ENCODE measurements at regions of chr18 and their contacts with region 1.

Region 1: GRCh38 chr18:51110073-51110803 is 80.2 kb downstream of the SMAD4 start:
- DNase-seq: peak; percentile 73
- H3K4me3 ChIP-seq: no peak overlapping the region
- H3K27ac ChIP-seq: no peak overlapping the region
- H3K4me1 ChIP-seq: peaks cover 0 to 6% (median 3%) of the 10 kb centered on the region in 4 donors
- H3K27me3 ChIP-seq: no peaks in the 10 kb centered on the region
- CTCF ChIP-seq: peak; percentile 83 to 98 (median 85)
- EP300 ChIP-seq: no peak
- POLR2A ChIP-seq: no peak

Region 2: GRCh38 chr18:51211552-51211951 is 101.3 kb after region 1 on chr18:
- intact Hi-C with region 1: no loop called
- DNase-seq: no peak
- H3K4me3 ChIP-seq: no peak overlapping the region
- H3K27ac ChIP-seq: no peak overlapping the region
- H3K4me1 ChIP-seq: no peaks in the 10 kb centered on the region
- H3K27me3 ChIP-seq: no peaks in the 10 kb centered on the region
- CTCF ChIP-seq: no peak
- EP300 ChIP-seq: no peak
- POLR2A ChIP-seq: no peak

Region 3: GRCh38 chr18:51383116-51383515 is 272.9 kb after region 1 on chr18:
- intact Hi-C with region 1: loop called (anchors 2 kb)
- DNase-seq: no peak
- H3K4me3 ChIP-seq: no peak overlapping the region
- H3K27ac ChIP-seq: no peak overlapping the region
- H3K4me1 ChIP-seq: no peaks in the 10 kb centered on the region
- H3K27me3 ChIP-seq: no peaks in the 10 kb centered on the region
- CTCF ChIP-seq: no peak
- EP300 ChIP-seq: no peak
- POLR2A ChIP-seq: no peak

Region 4: DNA sequence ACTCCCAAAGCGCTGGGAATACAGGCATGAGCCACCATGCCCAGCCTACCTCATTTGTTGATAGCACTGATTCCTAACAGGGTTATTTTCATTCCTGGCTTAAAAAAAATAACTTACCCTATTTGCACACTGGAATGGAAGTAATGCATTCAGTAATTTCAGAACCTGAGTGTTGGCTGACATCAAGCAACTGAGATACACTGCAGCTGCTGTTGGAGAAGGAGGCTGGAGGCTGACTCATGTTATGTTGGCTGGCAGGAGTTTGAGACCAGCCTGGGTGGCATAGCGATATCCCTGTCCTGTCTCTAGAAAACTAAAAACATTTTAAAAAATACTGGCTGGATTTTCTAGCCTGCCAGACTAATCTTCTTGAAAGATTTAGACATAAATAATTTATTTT is 472.3 kb after region 1 on chr18:
- intact Hi-C with region 1: no loop called
- DNase-seq: no peak
- H3K4me3 ChIP-seq: no peak overlapping the region
- H3K27ac ChIP-seq: no peak overlapping the region
- H3K4me1 ChIP-seq: no peaks in the 10 kb centered on the region
- H3K27me3 ChIP-seq: no peaks in the 10 kb centered on the region
- CTCF ChIP-seq: no peak
- EP300 ChIP-seq: no peak
- POLR2A ChIP-seq: no peak

Region 5: GRCh38 chr18:51621113-51621863 is 511.1 kb after region 1 on chr18:
- intact Hi-C with region 1: loop called (anchors 5 kb)
- DNase-seq: no peak
- H3K4me3 ChIP-seq: no peak overlapping the region
- H3K27ac ChIP-seq: no peak overlapping the region
- H3K4me1 ChIP-seq: peaks cover 0 to 8% (median 0%) of the 10 kb centered on the region in 4 donors
- H3K27me3 ChIP-seq: peaks cover 0 to 14% (median 0%) of the 10 kb centered on the region in 3 donors
- CTCF ChIP-seq: peak; percentile 12 to 54 (median 28)
- EP300 ChIP-seq: no peak
- POLR2A ChIP-seq: no peak